MCF 10A (cell line): ENCODE measurements at regions of chr10 and their contacts with region 1.

Region 1: DNA sequence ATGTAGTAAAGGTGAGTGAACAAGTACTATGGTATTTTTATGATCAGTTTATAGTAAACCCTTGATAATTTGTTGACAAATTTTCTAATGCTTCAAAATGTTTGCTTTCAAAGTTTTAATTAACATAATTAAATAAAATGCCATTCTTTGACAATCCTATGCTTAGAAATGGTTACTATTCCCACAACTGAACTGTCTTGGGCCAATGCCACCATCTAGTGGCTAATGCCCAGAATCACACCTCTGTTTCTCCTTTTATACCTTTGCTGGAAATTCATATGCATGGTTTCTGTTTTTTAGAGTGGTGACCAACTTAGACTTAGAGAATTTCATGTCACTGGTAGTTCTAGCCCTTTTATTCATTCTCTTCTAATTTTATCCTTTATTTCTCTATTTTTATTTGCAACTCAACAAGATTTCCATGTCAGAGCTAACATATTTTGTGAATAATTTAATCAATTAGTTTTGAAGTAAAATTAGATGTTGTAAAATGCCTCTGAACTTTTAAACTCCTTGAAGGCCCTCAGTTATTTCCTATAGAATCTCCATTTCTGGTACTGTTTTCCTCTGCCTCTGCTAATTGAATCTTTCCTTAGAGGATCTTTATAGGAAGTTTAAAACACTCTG is 31.1 kb downstream of the PCGF5 start:
- DNase-seq: peak; percentile 80
- H3K4me3 Mint-ChIP-seq: no peak overlapping the region
- H3K27ac Mint-ChIP-seq: no peak overlapping the region
- H3K4me1 Mint-ChIP-seq: no peaks in the 10 kb centered on the region
- H3K27me3 Mint-ChIP-seq: no peaks in the 10 kb centered on the region
- CTCF ChIP-seq: peak; percentile 92

Region 2: GRCh38 chr10:90912174-90912573 is 339.4 kb before region 1 on chr10:
- CTCF ChIA-PET with region 1: interaction called, 87 read pairs
- POLR2A ChIA-PET with region 1: interaction called, 21 read pairs
- intact Hi-C with region 1: loop called (anchors 1 kb)
- DNase-seq: peak; percentile 61
- H3K4me3 Mint-ChIP-seq: peak overlapping the region; percentile 31
- H3K27ac Mint-ChIP-seq: peak overlapping the region; percentile 83
- H3K4me1 Mint-ChIP-seq: peaks cover 16% of the 10 kb centered on the region
- H3K27me3 Mint-ChIP-seq: no peaks in the 10 kb centered on the region
- CTCF ChIP-seq: no peak

Region 3: DNA sequence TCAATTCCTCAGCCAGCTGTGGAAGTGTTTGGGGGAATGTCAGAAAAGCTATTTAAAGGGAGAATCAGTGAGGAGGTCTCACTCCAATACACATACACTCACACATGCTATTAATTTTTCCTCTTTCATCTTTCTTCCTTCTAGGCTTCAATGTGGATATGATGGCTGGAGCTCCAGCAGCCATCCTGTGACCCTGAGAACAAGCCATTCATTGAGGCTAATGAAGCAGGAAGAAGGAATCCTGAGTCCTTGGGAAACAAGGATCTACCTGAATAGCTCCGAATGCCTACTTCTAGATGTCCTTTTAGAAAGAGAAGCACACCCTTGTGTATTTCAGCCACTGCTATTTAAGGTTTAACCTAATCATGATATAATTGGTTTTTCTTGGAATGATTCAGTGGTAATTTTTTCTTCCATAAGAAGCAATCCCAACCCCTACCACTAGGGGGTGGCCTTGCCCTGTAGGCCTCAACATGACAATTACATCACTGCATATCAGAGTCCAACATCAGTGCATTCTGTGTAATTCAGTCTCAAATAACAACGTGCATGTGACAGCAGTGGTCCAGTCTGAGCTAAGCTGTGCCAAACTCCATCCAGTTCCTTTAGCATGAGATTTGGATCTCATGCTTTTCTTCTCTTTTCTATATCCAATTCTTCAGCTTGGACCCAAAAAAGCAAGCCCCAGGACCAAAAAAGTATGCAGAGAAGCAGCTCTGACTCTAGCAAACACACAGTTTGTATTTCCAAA is 245.4 kb before region 1 on chr10:
- CTCF ChIA-PET with region 1: interaction called, 96 read pairs
- POLR2A ChIA-PET with region 1: interaction called, 3 read pairs
- intact Hi-C with region 1: loop called (anchors 1 kb)
- DNase-seq: peak; percentile 73
- H3K4me3 Mint-ChIP-seq: no peak overlapping the region
- H3K27ac Mint-ChIP-seq: no peak overlapping the region
- H3K4me1 Mint-ChIP-seq: no peaks in the 10 kb centered on the region
- H3K27me3 Mint-ChIP-seq: no peaks in the 10 kb centered on the region
- CTCF ChIP-seq: peak; percentile 80

Region 4: DNA sequence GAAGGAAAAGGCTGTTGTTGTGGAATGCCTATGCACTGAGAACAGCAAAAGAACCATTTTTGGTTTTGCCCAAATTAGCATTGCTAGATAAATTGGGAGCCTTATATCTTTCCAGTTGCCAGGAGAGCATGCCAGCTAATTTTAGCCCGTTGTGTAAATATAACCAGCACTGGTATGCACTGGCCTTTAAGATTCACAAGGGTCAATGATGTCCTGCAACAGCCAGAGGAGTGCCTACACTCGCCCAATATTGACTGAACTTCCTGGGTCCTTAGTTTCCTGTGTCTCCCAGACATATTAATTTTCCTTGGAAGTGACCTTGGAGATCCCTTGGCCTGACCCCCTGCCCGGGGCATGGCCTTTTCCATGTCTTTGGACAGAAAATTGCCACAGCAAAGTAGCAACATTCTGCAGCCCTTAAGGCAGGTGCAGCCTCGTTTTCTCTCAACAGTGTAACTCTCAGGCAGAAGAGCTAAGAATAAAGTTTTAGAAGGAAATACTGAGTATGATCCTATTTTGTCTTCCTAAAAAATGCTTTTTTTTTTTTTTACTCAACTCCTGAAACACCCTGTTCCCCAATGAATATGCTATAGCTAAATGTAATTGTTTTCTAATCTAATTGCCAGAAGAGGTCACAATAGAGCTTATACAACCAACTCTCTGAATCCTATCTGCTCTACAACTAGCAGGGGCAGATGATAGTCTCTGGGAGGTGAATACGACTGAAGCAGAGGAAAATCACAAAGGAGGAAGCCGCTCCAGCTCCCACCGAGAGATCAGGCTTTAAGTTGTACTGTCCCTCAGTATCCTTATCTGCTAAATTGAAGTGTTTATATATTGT is 163.0 kb before region 1 on chr10:
- CTCF ChIA-PET with region 1: interaction called, 125 read pairs
- POLR2A ChIA-PET with region 1: interaction called, 15 read pairs
- intact Hi-C with region 1: loop called (anchors 1 kb)
- DNase-seq: peak; percentile 27
- H3K4me3 Mint-ChIP-seq: no peak overlapping the region
- H3K27ac Mint-ChIP-seq: no peak overlapping the region
- H3K4me1 Mint-ChIP-seq: peaks cover 5% of the 10 kb centered on the region
- H3K27me3 Mint-ChIP-seq: no peaks in the 10 kb centered on the region
- CTCF ChIP-seq: peak; percentile 28